ENCODE measurements at regions of chrX and their contacts with region 1.

Region 1: GRCh38 chrX:120690344-120690743 is 60.5 kb upstream of the C1GALT1C1 start:
- DNase-seq: no peak
- H3K4me3 ChIP-seq: no peak overlapping the region
- H3K27ac ChIP-seq: no peak overlapping the region
- H3K4me1 ChIP-seq: no peaks in the 10 kb centered on the region
- H3K27me3 ChIP-seq: no peaks in the 10 kb centered on the region
- CTCF ChIP-seq: no peak

Region 2: DNA sequence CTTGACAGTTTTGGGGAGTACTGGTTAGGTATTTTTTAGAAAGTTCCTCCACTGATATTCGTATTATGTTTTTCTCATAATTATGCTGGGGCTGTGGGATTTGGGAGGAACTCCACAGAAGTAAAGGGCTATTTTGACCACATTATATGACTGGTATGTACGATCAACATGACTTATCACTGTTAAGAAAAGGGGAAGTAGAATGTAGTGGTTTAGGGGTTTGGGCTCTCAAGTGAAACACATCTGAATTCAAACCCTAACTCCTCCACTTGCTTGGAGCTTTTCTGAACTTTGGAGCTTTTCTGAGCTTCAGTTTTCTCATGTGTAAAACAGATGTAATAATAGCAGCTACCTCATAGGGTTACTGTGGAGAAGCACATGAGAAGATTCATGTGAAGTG is 36.0 kb after region 1 on chrX:
- CTCF ChIA-PET with region 1: no interaction called
- POLR2A ChIA-PET with region 1: no interaction called
- intact Hi-C with region 1: loop called (anchors 5 kb)
- DNase-seq: no peak
- H3K4me3 ChIP-seq: no peak overlapping the region
- H3K27ac ChIP-seq: no peak overlapping the region
- H3K4me1 ChIP-seq: no peaks in the 10 kb centered on the region
- H3K27me3 ChIP-seq: no peaks in the 10 kb centered on the region
- CTCF ChIP-seq: no peak

Region 3: DNA sequence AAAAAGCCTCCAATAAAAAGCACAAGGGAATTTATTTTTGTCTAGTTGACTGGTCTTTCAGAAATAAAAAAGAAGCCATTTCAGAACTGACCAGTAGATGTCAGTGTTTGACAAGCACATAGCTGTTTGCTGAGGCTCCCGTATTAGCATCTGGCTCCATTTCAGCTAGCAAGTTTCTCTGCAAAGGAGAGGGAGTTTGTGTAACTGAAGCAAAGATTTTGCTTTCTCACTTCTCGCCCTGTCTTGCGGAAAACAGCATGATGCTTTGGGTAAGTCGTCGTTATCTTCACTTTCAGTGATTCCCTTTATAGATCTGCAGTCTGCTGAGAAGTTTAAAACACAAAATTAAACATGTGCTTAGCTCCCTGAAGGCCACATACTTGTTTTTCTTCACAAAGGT is 99.8 kb after region 1 on chrX:
- CTCF ChIA-PET with region 1: no interaction called
- POLR2A ChIA-PET with region 1: no interaction called
- intact Hi-C with region 1: no loop called
- DNase-seq: peak; percentile 23 to 59
- H3K4me3 ChIP-seq: no peak overlapping the region
- H3K27ac ChIP-seq: no peak overlapping the region
- H3K4me1 ChIP-seq: peaks cover 25% of the 10 kb centered on the region
- H3K27me3 ChIP-seq: no peaks in the 10 kb centered on the region
- CTCF ChIP-seq: peak; percentile 87

Measured in PC-9 (cell line).